GM18951 (cell line): ENCODE measurements at regions of chr11 and their contacts with region 1.

Region 1: GRCh38 chr11:1694064-1694845 is 2.7 kb upstream of the KRTAP5-6 start:
- POLR2A ChIP-seq: no peak

Region 2: GRCh38 chr11:859509-860131 is 834.6 kb before region 1 on chr11:
- in situ Hi-C with region 1: no loop called
- POLR2A ChIP-seq: no peak

Region 3: GRCh38 chr11:1810761-1811160 is 116.5 kb after region 1 on chr11:
- in situ Hi-C with region 1: loop called (anchors 10 kb)
- POLR2A ChIP-seq: no peak

Region 4: GRCh38 chr11:2151500-2152257 is 457.4 kb after region 1 on chr11:
- in situ Hi-C with region 1: loop called (anchors 25 kb)
- POLR2A ChIP-seq: no peak